AG04450 (cell line): ENCODE measurements at regions of chr1 and their contacts with region 1.

Region 1: GRCh38 chr1:212035123-212035834 is at the starts of genes DTL and INTS7:
- DNase-seq: peak; percentile 98
- H3K4me3 ChIP-seq: peak within 1 kb of the TSS; percentile 90
- H3K27ac ChIP-seq: peak within 1 kb of the TSS; percentile 59
- H3K27me3 ChIP-seq: no peaks in the 10 kb centered on the region
- CTCF ChIP-seq: peak; percentile 89
- polyA plus RNA-seq, gene DTL: 4.0 and 6.0 TPM in 2 replicates
- polyA plus RNA-seq, gene INTS7: 17.9 and 20.1 TPM in 2 replicates

Region 2: GRCh38 chr1:211675230-211676105 is 359.8 kb before region 1 on chr1 and contains the start of gene NEK2:
- CTCF ChIA-PET with region 1: interaction called, 304 read pairs
- POLR2A ChIA-PET with region 1: interaction called, 8 read pairs
- DNase-seq: peak; percentile 63
- H3K4me3 ChIP-seq: peak within 1 kb of the TSS; percentile 82
- H3K27ac ChIP-seq: peak within 1 kb of the TSS; percentile 39
- H3K27me3 ChIP-seq: no peaks in the 10 kb centered on the region
- CTCF ChIP-seq: no peak
- polyA plus RNA-seq, gene NEK2: 5.4 and 8.8 TPM in 2 replicates

Region 3: DNA sequence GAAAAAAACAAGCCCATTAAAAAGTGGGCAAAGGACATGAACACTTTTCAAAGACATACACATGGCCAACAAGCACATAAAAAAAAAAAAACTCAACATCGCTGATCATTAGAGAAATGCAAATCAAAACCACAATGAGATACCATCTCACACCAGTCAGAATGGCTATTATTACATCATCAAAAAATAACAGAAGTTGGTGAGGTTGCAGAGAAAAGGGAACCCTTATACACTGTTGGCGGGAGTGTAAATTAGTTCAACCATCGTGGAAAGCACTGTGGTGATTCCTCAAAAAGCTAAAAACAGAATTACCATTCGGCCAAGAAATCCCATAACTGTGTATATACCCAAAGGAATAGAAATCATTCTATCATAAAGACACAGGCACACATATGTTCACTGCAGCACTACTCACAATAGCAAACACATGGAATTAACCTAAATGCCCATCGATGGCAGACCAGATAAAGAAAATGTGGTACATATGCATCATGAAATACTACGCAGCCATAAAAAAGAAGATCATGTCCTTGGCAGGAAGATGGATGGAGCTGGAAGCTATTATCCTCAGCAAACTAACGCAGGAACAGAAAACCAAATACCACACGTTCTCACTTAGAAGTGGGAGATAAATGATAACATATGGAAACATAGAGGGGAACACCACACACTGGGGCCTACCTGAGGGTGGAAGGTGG is 70.0 kb before region 1 on chr1:
- CTCF ChIA-PET with region 1: interaction called, 11 read pairs
- POLR2A ChIA-PET with region 1: interaction called, 4 read pairs
- DNase-seq: no peak
- H3K4me3 ChIP-seq: no peak overlapping the region
- H3K27ac ChIP-seq: no peak overlapping the region
- H3K27me3 ChIP-seq: no peaks in the 10 kb centered on the region
- CTCF ChIP-seq: no peak

Region 4: DNA sequence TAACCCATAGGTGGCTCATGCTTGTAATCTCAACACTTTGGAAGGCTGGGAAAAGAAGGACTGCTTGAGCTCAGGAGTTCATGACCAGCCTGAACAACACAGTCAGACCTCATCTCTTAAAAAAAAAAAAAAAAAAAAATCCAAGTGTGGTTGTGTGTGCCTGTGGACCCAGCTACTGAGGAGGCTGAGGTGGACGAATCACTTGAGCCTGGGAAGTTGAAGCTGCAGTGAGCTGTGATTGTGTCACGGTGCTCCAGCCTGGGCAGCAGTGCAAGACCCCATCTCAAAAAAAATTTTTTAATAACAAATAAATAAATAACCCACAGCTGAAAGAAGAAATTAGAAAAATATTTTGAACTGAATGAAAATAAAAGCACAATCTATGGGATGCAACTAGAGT is 13.7 kb before region 1 on chr1:
- CTCF ChIA-PET with region 1: interaction called, 95 read pairs
- POLR2A ChIA-PET with region 1: no interaction called
- DNase-seq: no peak
- H3K4me3 ChIP-seq: no peak overlapping the region
- H3K27ac ChIP-seq: no peak overlapping the region
- H3K27me3 ChIP-seq: no peaks in the 10 kb centered on the region
- CTCF ChIP-seq: no peak

Region 5: DNA sequence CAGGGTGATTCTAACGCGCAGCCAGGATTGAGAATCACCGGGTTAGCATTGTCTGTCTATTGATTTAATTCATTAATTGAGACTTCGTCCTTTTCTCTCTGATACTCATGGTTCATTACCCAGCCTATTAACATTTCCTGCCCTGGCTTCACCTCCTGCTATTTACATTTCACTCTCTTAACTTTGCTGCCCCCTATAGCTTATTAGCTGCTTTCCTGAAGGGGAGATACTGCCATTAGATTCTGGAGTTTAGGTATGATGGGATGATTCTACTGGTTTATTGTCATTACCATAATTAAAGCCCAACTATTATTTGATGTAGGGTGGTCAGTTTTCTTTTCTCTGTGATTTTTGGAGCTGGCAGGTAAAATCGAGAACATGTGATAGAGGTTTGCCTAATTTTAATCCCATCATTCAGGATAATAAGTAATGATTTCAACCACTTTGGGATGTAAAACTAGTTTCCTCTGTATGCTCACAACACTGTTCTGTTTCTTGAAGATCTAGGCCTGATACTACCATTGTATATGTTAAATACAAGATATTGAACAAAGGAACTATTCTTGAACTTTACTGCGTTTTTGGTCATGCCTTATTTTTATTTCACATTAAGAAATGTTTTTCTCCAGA is 256.3 kb after region 1 on chr1:
- CTCF ChIA-PET with region 1: interaction called, 15 read pairs
- POLR2A ChIA-PET with region 1: no interaction called
- DNase-seq: no peak
- H3K4me3 ChIP-seq: no peak overlapping the region
- H3K27ac ChIP-seq: no peak overlapping the region
- H3K27me3 ChIP-seq: no peaks in the 10 kb centered on the region
- CTCF ChIP-seq: peak; percentile 75

Region 6: DNA sequence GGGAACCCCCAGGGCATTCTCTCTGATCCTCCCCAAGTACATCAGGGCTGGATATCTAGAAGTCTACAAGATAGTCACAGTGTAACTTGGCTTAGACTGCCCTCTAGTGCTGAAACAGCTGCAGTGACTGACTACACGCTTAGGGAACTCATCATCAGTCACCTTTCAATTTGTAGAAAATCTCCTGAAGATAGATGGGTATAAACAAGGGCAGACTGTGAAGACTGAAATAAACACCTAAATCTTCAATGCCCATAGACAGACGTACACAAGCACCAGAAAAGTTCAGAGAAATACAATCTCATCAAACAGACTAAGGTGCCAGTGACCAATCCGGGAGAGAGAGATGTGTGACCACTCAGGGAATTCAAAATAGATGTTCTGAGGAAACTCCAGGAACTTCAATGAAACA is 332.8 kb after region 1 on chr1:
- CTCF ChIA-PET with region 1: interaction called, 36 read pairs
- POLR2A ChIA-PET with region 1: no interaction called
- DNase-seq: peak; percentile 47
- H3K4me3 ChIP-seq: no peak overlapping the region
- H3K27ac ChIP-seq: no peak overlapping the region
- H3K27me3 ChIP-seq: no peaks in the 10 kb centered on the region
- CTCF ChIP-seq: peak; percentile 95